Activated CD8-positive, alpha-beta T cell treated with anti-CD3 and anti-CD28 coated beads for 36 hours (primary cell): ENCODE measurements at regions of chr17 and their contacts with region 1.

Region 1: DNA sequence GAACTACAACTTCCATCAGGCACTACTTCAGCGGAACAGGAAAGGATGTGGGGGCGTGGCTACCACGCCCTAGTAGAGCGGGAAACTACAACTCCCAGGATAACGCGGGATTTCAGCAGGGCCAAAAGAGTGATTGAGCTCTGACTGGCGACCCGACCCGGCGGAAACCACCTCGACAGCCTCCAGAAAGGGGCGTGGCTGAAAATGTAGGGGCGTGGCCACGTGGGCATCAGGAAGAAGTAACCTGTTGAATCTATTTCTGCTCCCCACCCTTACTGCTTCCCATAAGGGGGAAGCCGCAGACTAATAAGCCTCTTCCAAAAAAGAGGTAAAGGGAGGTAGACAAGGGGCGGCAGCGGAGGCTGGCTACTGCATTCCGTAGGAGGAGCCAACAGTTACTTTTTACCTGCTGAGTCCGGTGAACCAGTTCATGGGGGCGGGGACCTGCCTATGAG is at the start of gene TMEM102:
- DNase-seq: peak; percentile 99
- ATAC-seq: peak; percentile 82
- H3K4me3 Mint-ChIP-seq: peak within 1 kb of the TSS; percentile 94
- H3K27ac Mint-ChIP-seq: peak within 1 kb of the TSS; percentile 97
- H3K4me1 Mint-ChIP-seq: peaks cover 23% of the 10 kb centered on the region
- H3K27me3 Mint-ChIP-seq: peaks cover 12% of the 10 kb centered on the region
- CTCF ChIP-seq: no peak
- total RNA-seq, gene TMEM102: 12.5 to 14.2 TPM

Region 2: GRCh38 chr17:7136266-7136877 is 298.9 kb before region 1 on chr17:
- CTCF ChIA-PET with region 1: no interaction called
- POLR2A ChIA-PET with region 1: no interaction called
- intact Hi-C with region 1: no loop called
- DNase-seq: peak; percentile 88
- ATAC-seq: no peak
- H3K4me3 Mint-ChIP-seq: no peak overlapping the region
- H3K27ac Mint-ChIP-seq: no peak overlapping the region
- H3K4me1 Mint-ChIP-seq: peaks cover 22% of the 10 kb centered on the region
- H3K27me3 Mint-ChIP-seq: peaks cover 6% of the 10 kb centered on the region
- CTCF ChIP-seq: peak; percentile 95

Region 3: GRCh38 chr17:7361906-7362305 is 73.3 kb before region 1 on chr17:
- CTCF ChIA-PET with region 1: interaction called, 68 read pairs
- POLR2A ChIA-PET with region 1: interaction called, 5 read pairs
- intact Hi-C with region 1: no loop called
- DNase-seq: no peak
- ATAC-seq: no peak
- H3K4me3 Mint-ChIP-seq: no peak overlapping the region
- H3K27ac Mint-ChIP-seq: no peak overlapping the region
- H3K4me1 Mint-ChIP-seq: no peaks in the 10 kb centered on the region
- H3K27me3 Mint-ChIP-seq: no peaks in the 10 kb centered on the region
- CTCF ChIP-seq: no peak

Region 4: DNA sequence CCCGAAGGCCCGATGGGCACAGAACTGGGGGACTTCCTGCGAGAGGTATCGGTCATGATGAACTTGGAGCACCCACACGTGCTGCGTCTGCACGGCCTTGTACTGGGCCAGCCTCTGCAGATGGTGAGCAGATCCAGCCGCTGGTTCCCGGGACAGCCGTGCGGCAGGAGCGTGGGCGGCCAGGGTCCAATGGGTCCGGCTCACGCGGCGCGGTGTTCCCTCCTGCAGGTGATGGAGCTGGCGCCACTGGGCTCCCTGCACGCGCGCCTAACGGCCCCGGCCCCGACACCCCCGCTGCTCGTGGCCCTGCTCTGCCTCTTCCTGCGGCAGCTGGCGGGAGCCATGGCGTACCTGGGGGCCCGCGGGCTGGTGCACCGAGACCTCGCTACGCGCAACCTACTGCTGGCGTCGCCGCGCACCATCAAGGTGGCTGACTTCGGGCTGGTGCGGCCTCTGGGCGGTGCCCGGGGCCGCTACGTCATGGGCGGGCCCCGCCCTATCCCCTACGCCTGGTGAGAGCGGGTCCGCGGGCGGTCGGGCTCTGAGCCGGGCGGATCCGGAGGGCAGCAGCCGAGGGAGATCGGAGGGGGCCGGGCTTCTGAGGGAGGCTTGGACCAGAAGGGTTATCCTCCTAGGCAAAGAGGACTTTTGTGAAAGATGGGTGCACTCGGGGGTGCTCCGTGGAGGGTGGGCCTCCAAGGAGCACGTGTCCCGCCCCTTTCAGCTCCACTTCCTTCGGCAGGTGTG is 51.3 kb before region 1 on chr17:
- CTCF ChIA-PET with region 1: interaction called, 5 read pairs
- POLR2A ChIA-PET with region 1: interaction called, 11 read pairs
- intact Hi-C with region 1: no loop called
- DNase-seq: peak; percentile 82
- ATAC-seq: peak; percentile 96
- H3K4me3 Mint-ChIP-seq: peak overlapping the region; percentile 76
- H3K27ac Mint-ChIP-seq: peak overlapping the region; percentile 85
- H3K4me1 Mint-ChIP-seq: peaks cover 7% of the 10 kb centered on the region
- H3K27me3 Mint-ChIP-seq: peaks cover 32% of the 10 kb centered on the region
- CTCF ChIP-seq: no peak

Region 5: GRCh38 chr17:7403977-7404736 is 31.1 kb before region 1 on chr17 and contains the start of gene TMEM256:
- CTCF ChIA-PET with region 1: interaction called, 27 read pairs
- POLR2A ChIA-PET with region 1: interaction called, 10 read pairs
- intact Hi-C with region 1: loop called (anchors 1 kb)
- DNase-seq: peak; percentile 99
- ATAC-seq: peak; percentile 90
- H3K4me3 Mint-ChIP-seq: peak within 1 kb of the TSS; percentile 95
- H3K27ac Mint-ChIP-seq: peak within 1 kb of the TSS; percentile 98
- H3K4me1 Mint-ChIP-seq: peaks cover 14% of the 10 kb centered on the region
- H3K27me3 Mint-ChIP-seq: peaks cover 2% of the 10 kb centered on the region
- CTCF ChIP-seq: no peak
- total RNA-seq, gene TMEM256: 55.8 to 60.6 TPM

Region 6: GRCh38 chr17:7454980-7455379 is 19.7 kb after region 1 on chr17:
- CTCF ChIA-PET with region 1: interaction called, 48 read pairs
- POLR2A ChIA-PET with region 1: interaction called, 83 read pairs
- intact Hi-C with region 1: no loop called
- DNase-seq: no peak
- ATAC-seq: no peak
- H3K4me3 Mint-ChIP-seq: peak overlapping the region; percentile 95
- H3K27ac Mint-ChIP-seq: peak overlapping the region; percentile 95
- H3K4me1 Mint-ChIP-seq: peaks cover 21% of the 10 kb centered on the region
- H3K27me3 Mint-ChIP-seq: no peaks in the 10 kb centered on the region
- CTCF ChIP-seq: no peak